Pancreas (tissue), 10 donors: ENCODE measurements at regions of chr9 and their contacts with region 1.

Region 1: DNA sequence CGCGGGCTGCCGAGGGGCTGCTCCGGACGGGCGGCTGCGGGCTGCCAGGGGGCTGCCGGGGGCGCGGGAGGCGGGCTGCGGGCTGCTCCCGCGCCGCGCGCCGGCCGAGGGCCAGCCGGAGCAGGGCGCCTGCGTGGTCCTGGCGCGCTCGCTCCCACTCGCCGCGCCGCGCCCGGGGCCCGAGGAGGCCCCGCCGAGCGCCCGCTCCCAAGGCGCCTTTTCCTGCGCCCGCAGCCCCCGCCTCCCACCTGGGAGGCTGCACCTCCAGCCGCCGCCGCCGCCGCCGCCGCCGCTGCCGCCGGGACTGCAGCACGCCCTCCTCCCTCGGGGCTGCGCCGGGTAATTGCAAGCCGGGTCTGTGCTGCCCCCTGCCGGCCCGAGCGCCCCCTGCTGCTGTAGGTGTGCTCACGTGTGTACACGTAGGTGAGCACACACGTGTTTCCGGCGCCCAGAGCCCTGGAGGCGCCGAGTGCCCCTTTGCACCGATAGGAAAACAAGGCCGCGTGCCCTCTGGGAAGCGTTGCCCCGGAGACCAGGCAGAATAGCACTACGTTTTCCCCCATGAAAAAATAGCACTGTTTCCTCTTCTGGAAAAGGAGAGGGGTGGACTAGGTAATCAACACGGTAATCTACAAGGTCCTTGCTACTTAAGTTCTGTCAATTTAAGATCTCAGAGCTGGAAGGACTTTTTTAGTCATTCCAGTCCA is at the start of gene EPB41L4B:
- DNase-seq: peak; percentile 92 to 99 (median 98)
- ATAC-seq: peak; percentile 72 to 82 (median 76)
- H3K4me3 ChIP-seq: peak within 1 kb of the TSS; percentile 59 to 88 (median 70)
- H3K27ac ChIP-seq: peak within 1 kb of the TSS; percentile 85 to 97 (median 92)
- H3K4me1 ChIP-seq: peaks cover 14 to 15% (median 15%) of the 10 kb centered on the region in 3 donors
- H3K27me3 ChIP-seq: no peaks in the 10 kb centered on the region
- CTCF ChIP-seq: peak; percentile 90 to 98 (median 92)
- total RNA-seq, gene EPB41L4B: 78.5 to 122 (median 93.9) TPM

Region 2: GRCh38 chr9:109192732-109193361 is 128.0 kb before region 1 on chr9:
- intact Hi-C with region 1: loop called in 1 of 3 experiments (anchors 10 kb)
- DNase-seq: peak in 5 of 6 donors; percentile 47 to 70 (median 59)
- ATAC-seq: peak; percentile 88 to 99 (median 96)
- H3K4me3 ChIP-seq: no peak overlapping the region
- H3K27ac ChIP-seq: no peak overlapping the region
- H3K4me1 ChIP-seq: no peaks in the 10 kb centered on the region
- H3K27me3 ChIP-seq: no peaks in the 10 kb centered on the region
- CTCF ChIP-seq: peak in 3 of 4 donors; percentile 17 to 40 (median 31)

Region 3: DNA sequence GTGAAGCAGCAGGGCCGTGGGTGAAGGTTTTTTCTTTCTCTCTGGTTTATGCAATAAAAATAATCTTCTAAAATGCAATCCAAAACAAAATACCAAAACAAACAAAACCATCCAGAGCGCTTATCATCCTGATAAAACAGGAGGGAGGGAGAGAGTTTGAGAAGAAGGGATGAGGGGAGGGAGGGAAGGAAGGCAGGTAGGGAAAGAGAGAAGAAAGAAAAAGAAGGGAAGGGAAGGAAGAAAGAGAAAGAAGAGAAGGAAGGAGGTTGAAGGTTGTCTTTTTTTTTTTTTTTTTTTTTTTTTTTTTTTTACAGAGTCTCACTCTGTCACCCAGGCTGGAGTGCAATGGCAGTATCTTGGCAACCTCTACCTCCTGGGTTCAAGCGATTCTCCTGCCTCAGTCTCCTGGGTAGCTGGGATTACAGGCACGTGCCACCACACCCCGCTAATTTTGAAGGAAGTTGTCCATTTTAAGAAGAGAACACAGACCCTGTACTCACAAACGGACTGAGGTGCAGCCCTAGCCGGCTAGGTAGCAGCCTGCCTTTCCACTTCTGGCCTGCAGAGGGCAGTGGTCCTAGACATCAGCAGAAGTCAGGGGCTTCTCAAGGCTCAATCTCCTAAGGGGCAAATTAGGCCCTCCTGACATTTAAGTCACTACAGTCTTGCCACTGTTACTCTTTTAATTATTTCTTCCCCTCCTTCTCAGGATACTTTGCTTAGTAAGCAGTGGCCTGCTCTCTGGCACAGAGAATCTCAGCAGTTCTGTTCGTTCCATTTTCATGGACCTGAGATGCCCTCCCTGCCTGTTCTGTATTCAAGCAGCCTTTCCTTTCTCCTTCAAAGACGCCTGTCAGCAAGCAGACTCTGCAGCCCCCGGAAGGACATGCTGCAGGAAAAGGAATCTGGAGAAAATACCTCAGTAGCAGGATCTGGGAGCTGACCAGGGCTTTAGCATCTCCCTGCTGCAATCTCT is 76.5 kb before region 1 on chr9:
- intact Hi-C with region 1: loop called in 1 of 3 experiments (anchors 5 kb)
- DNase-seq: peak; percentile 66 to 84 (median 76)
- ATAC-seq: peak; percentile 28 to 78 (median 61)
- H3K4me3 ChIP-seq: no peak overlapping the region
- H3K27ac ChIP-seq: peak overlapping the region in 3 of 4 donors; percentile 14 to 93 (median 88)
- H3K4me1 ChIP-seq: peaks cover 26 to 35% (median 32%) of the 10 kb centered on the region in 3 donors
- H3K27me3 ChIP-seq: no peaks in the 10 kb centered on the region
- CTCF ChIP-seq: peak; percentile 85 to 94 (median 92)

Region 4: GRCh38 chr9:109251080-109251775 is 69.7 kb before region 1 on chr9:
- intact Hi-C with region 1: loop called in 2 of 3 experiments (anchors 5 kb)
- DNase-seq: peak; percentile 75 to 90 (median 88)
- ATAC-seq: peak; percentile 60 to 74 (median 66)
- H3K4me3 ChIP-seq: no peak overlapping the region
- H3K27ac ChIP-seq: peak overlapping the region; percentile 79 to 93 (median 87)
- H3K4me1 ChIP-seq: peaks cover 70 to 83% (median 73%) of the 10 kb centered on the region in 3 donors
- H3K27me3 ChIP-seq: no peaks in the 10 kb centered on the region
- CTCF ChIP-seq: no peak